ENCODE measurements at regions of chr1 and their contacts with region 1.

Region 1: DNA sequence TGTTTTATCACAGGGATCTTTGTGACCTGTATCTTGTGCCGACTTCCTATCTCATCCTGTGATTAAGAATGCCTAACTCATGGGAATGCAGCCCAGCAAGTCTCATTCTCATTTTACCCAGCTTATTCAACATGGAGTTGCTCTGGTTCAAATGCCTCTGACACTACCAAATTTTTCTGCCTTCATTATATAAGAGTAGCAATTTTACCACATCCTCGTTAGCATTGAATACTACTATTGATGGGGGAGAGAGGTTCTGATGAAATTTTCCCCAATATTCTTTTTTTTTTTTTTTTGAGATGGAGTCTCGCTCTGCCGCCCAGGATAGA is 44.5 kb upstream of the PPIH start:
- DNase-seq: no peak
- ATAC-seq: no peak
- H3K4me3 ChIP-seq: no peak overlapping the region
- H3K27ac ChIP-seq: no peak overlapping the region
- H3K4me1 ChIP-seq: no peaks in the 10 kb centered on the region
- H3K27me3 ChIP-seq: no peaks in the 10 kb centered on the region
- CTCF ChIP-seq: no peak
- POLR2A ChIP-seq: no peak
- RAD21 ChIP-seq: no peak

Region 2: GRCh38 chr1:42335050-42335808 is 278.5 kb before region 1 on chr1 and contains the start of gene FOXJ3:
- CTCF ChIA-PET with region 1: no interaction called
- POLR2A ChIA-PET with region 1: no interaction called
- RAD21 ChIA-PET with region 1: no interaction called
- intact Hi-C with region 1: no loop called
- DNase-seq: peak; percentile 96
- ATAC-seq: peak; percentile 84
- H3K4me3 ChIP-seq: peak within 1 kb of the TSS; percentile 64 to 95
- H3K27ac ChIP-seq: peak within 1 kb of the TSS; percentile 85
- H3K4me1 ChIP-seq: peaks cover 0 to 19% of the 10 kb centered on the region in 2 experiments; a peak in 3 of 4 replicates
- H3K27me3 ChIP-seq: no peaks in the 10 kb centered on the region
- CTCF ChIP-seq: no peak
- POLR2A ChIP-seq: peak; percentile 75
- RAD21 ChIP-seq: 0 out of 2 replicates have a peak, but pooled peaks have one; percentile 8
- total RNA-seq, gene FOXJ3: 51.1 TPM

Region 3: DNA sequence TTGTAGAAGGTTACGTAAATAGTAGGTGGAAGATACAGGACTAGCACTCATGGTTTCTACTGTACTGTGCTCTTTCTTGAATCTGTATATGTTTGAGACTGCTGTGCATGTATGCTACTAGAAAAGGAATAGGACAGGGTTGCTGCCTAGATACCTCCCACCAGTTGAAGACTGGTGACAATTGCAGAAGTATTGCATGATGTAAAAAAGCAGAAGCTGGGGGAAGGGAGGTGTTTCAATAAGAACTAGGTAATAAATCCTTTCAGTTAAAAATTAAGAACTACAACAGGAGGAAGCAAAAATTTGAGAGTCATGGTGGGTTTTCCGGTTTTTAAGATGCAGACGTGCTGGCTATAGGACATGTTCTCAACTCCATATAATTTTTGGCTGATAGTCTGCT is 62.6 kb before region 1 on chr1:
- CTCF ChIA-PET with region 1: no interaction called
- POLR2A ChIA-PET with region 1: no interaction called
- RAD21 ChIA-PET with region 1: no interaction called
- intact Hi-C with region 1: no loop called
- DNase-seq: no peak
- ATAC-seq: no peak
- H3K4me3 ChIP-seq: no peak overlapping the region
- H3K27ac ChIP-seq: no peak overlapping the region
- H3K4me1 ChIP-seq: no peaks in the 10 kb centered on the region
- H3K27me3 ChIP-seq: no peaks in the 10 kb centered on the region
- CTCF ChIP-seq: no peak
- POLR2A ChIP-seq: no peak
- RAD21 ChIP-seq: no peak

Region 4: GRCh38 chr1:42587753-42588152 is 26.0 kb before region 1 on chr1:
- CTCF ChIA-PET with region 1: no interaction called
- POLR2A ChIA-PET with region 1: no interaction called
- RAD21 ChIA-PET with region 1: no interaction called
- intact Hi-C with region 1: loop called (anchors 2 kb)
- DNase-seq: no peak
- ATAC-seq: no peak
- H3K4me3 ChIP-seq: no peak overlapping the region
- H3K27ac ChIP-seq: no peak overlapping the region
- H3K4me1 ChIP-seq: no peaks in the 10 kb centered on the region
- H3K27me3 ChIP-seq: no peaks in the 10 kb centered on the region
- CTCF ChIP-seq: no peak
- POLR2A ChIP-seq: no peak
- RAD21 ChIP-seq: no peak